ENCODE measurements at regions of chr5 and their contacts with region 1.

Region 1: DNA sequence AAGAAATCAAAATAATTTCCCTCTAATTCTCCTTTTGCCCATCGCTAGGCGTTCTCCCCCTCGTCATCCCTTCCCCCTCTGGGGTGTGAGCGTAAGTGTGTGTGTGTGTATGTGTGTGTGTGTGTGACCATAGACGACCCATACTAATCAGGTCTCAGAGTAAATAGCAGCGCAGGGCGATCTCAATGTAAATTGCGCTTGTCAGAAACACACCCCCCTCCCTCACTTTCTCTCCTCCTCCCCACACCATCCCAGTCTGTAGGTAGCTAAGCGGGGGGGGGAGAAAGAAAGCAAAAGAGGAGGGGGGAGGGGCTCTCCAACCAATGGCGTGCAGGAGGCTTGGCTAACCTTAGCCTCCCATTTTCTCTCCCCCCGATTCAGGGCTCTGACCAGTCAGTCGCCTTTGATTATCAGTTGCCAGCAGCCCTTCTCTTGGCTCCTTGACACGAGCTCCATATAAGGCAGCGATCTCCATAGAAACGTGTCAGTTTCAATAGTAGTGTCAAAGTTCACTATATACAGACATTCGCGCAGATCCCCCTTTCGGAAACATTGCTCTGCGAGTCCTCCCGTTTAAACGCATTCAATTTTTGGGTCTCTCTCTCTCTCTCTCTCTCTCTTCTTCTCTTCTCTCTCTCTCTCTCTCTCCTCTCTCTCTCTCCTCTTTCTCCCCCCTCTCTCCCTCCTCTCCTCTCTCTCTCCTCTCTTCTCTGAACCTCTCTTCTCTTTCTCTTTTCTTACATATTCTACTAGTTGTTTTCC is at the start of gene NR2F1:
- DNase-seq: peak; percentile 98
- ATAC-seq: peak; percentile 55
- H3K4me3 ChIP-seq: peak within 1 kb of the TSS; percentile 70 to 85
- H3K27ac ChIP-seq: peak within 1 kb of the TSS; percentile 99
- H3K4me1 ChIP-seq: peaks cover 20 to 33% of the 10 kb centered on the region in 2 experiments
- H3K27me3 ChIP-seq: no peaks in the 10 kb centered on the region
- CTCF ChIP-seq: no peak; a peak in 1 of 6 replicates
- POLR2A ChIP-seq: no peak
- RAD21 ChIP-seq: no peak; the same call in 1 of the 2 replicates
- total RNA-seq, gene NR2F1: 51.2 TPM

Region 2: GRCh38 chr5:93078082-93079038 is 504.5 kb before region 1 on chr5:
- CTCF ChIA-PET with region 1: no interaction called
- POLR2A ChIA-PET with region 1: no interaction called
- RAD21 ChIA-PET with region 1: no interaction called
- intact Hi-C with region 1: loop called (anchors 5 kb)
- DNase-seq: peak; percentile 99
- ATAC-seq: peak; percentile 96
- H3K4me3 ChIP-seq: peak overlapping the region in 1 of 2 experiments; percentile 16; a peak in 2 of 4 replicates
- H3K27ac ChIP-seq: peak overlapping the region; percentile 98
- H3K4me1 ChIP-seq: peaks cover 40 to 41% of the 10 kb centered on the region in 2 experiments
- H3K27me3 ChIP-seq: no peaks in the 10 kb centered on the region
- CTCF ChIP-seq: no peak
- POLR2A ChIP-seq: no peak
- RAD21 ChIP-seq: peak; percentile 35

Region 3: GRCh38 chr5:93189707-93190120 is 393.1 kb before region 1 on chr5:
- CTCF ChIA-PET with region 1: no interaction called
- POLR2A ChIA-PET with region 1: interaction called, 4 read pairs
- RAD21 ChIA-PET with region 1: interaction called in 1 of 2 experiments, 3 read pairs
- intact Hi-C with region 1: loop called (anchors 5 kb)
- DNase-seq: peak; percentile 78
- ATAC-seq: peak; percentile 58
- H3K4me3 ChIP-seq: peak overlapping the region in 1 of 2 experiments; percentile 5; a peak in 1 of 4 replicates
- H3K27ac ChIP-seq: peak overlapping the region; percentile 92
- H3K4me1 ChIP-seq: peaks cover 72 to 88% of the 10 kb centered on the region in 2 experiments
- H3K27me3 ChIP-seq: no peaks in the 10 kb centered on the region
- CTCF ChIP-seq: no peak
- POLR2A ChIP-seq: no peak
- RAD21 ChIP-seq: no peak; the same call in 1 of the 2 replicates

Region 4: GRCh38 chr5:93705896-93706295 is 123.0 kb after region 1 on chr5:
- CTCF ChIA-PET with region 1: no interaction called
- POLR2A ChIA-PET with region 1: no interaction called
- RAD21 ChIA-PET with region 1: no interaction called
- intact Hi-C with region 1: no loop called
- DNase-seq: no peak
- ATAC-seq: no peak
- H3K4me3 ChIP-seq: no peak overlapping the region
- H3K27ac ChIP-seq: no peak overlapping the region
- H3K4me1 ChIP-seq: no peaks in the 10 kb centered on the region
- H3K27me3 ChIP-seq: no peaks in the 10 kb centered on the region
- CTCF ChIP-seq: no peak
- POLR2A ChIP-seq: no peak
- RAD21 ChIP-seq: no peak

Region 5: DNA sequence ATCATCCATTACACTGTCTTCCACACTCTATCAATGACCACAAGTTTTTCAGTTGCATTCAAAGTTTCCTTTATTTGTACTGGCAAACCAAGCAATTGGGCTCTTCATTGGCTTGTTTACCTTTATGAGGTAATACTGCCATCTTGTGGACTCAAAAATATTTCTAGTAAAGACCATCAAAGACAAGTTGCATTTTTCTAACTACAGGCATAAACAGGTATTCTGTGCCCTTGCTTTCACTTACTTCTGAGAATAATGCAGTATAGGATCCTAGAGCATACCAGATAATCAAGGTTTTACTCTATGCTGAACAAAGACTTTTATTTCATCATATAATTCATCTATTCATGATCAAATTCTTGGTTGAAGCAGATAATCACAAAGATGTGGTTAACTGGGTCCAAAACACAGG is 332.3 kb after region 1 on chr5:
- CTCF ChIA-PET with region 1: interaction called, 3 read pairs
- POLR2A ChIA-PET with region 1: interaction called, 3 read pairs
- RAD21 ChIA-PET with region 1: no interaction called
- intact Hi-C with region 1: loop called (anchors 5 kb)
- DNase-seq: peak; percentile 54
- ATAC-seq: peak; percentile 62
- H3K4me3 ChIP-seq: no peak overlapping the region
- H3K27ac ChIP-seq: no peak overlapping the region
- H3K4me1 ChIP-seq: no peaks in the 10 kb centered on the region
- H3K27me3 ChIP-seq: no peaks in the 10 kb centered on the region
- CTCF ChIP-seq: peak; percentile 35 to 79 (median 42); a peak in 4 of 6 replicates
- POLR2A ChIP-seq: no peak
- RAD21 ChIP-seq: peak; percentile 76

Region 6: GRCh38 chr5:94893412-94894135 is 1310.7 kb after region 1 on chr5:
- CTCF ChIA-PET with region 1: no interaction called
- POLR2A ChIA-PET with region 1: no interaction called
- RAD21 ChIA-PET with region 1: interaction called in 1 of 2 experiments, 3 read pairs
- intact Hi-C with region 1: loop called (anchors 10 kb)
- DNase-seq: peak; percentile 34
- ATAC-seq: peak; percentile 86
- H3K4me3 ChIP-seq: no peak overlapping the region
- H3K27ac ChIP-seq: no peak overlapping the region
- H3K4me1 ChIP-seq: no peaks in the 10 kb centered on the region
- H3K27me3 ChIP-seq: no peaks in the 10 kb centered on the region
- CTCF ChIP-seq: peak; percentile 55 to 69 (median 58); a peak in 5 of 6 replicates
- POLR2A ChIP-seq: no peak
- RAD21 ChIP-seq: peak; percentile 77